ENCODE measurements at regions of chr9 and their contacts with region 1.

Region 1: GRCh38 chr9:69279084-69279729 is 45.8 kb upstream of the ENTREP1 start:
- DNase-seq: peak; percentile 69
- ATAC-seq: peak; percentile 96
- H3K4me3 Mint-ChIP-seq: no peak overlapping the region
- H3K27ac Mint-ChIP-seq: peak overlapping the region; percentile 24
- H3K4me1 Mint-ChIP-seq: peaks cover 9% of the 10 kb centered on the region
- H3K27me3 Mint-ChIP-seq: peaks cover 41% of the 10 kb centered on the region

Region 2: GRCh38 chr9:68631811-68632210 is 647.4 kb before region 1 on chr9:
- CTCF ChIA-PET with region 1: no interaction called
- POLR2A ChIA-PET with region 1: no interaction called
- intact Hi-C with region 1: no loop called
- DNase-seq: no peak
- ATAC-seq: no peak
- H3K4me3 Mint-ChIP-seq: no peak overlapping the region
- H3K27ac Mint-ChIP-seq: no peak overlapping the region
- H3K4me1 Mint-ChIP-seq: no peaks in the 10 kb centered on the region
- H3K27me3 Mint-ChIP-seq: peaks cover 15% of the 10 kb centered on the region

Region 3: GRCh38 chr9:69168709-69169217 is 110.4 kb before region 1 on chr9:
- CTCF ChIA-PET with region 1: no interaction called
- POLR2A ChIA-PET with region 1: no interaction called
- intact Hi-C with region 1: loop called in 1 of 2 experiments (anchors 5 kb)
- DNase-seq: peak; percentile 87
- ATAC-seq: peak; percentile 94
- H3K4me3 Mint-ChIP-seq: peak overlapping the region; percentile 70
- H3K27ac Mint-ChIP-seq: peak overlapping the region; percentile 73
- H3K4me1 Mint-ChIP-seq: peaks cover 25% of the 10 kb centered on the region
- H3K27me3 Mint-ChIP-seq: peaks cover 21% of the 10 kb centered on the region

Region 4: DNA sequence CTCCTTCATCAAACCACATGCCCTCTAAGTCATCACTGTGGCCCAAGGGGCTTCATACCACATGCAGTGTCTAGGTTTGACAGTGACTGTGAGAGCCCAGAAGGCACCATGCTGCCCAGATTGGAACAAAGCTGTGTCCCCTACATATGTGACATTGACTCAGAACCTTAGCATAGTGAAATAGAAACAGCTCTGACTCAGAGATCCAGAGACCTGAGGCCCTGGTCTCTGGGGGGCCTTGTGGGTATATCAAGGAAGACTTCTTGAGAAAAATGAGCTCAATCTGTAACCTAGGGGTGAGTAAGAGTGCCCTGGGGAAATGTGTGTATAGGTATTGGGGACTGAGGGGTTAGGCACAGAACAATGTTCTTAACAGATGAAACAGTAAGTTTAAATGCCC is 38.7 kb after region 1 on chr9:
- CTCF ChIA-PET with region 1: no interaction called
- POLR2A ChIA-PET with region 1: no interaction called
- intact Hi-C with region 1: loop called in 1 of 2 experiments (anchors 1 kb)
- DNase-seq: peak; percentile 55
- ATAC-seq: peak; percentile 97
- H3K4me3 Mint-ChIP-seq: no peak overlapping the region
- H3K27ac Mint-ChIP-seq: no peak overlapping the region
- H3K4me1 Mint-ChIP-seq: peaks cover 10% of the 10 kb centered on the region
- H3K27me3 Mint-ChIP-seq: peaks cover 19% of the 10 kb centered on the region

Region 5: GRCh38 chr9:69689991-69690538 is 410.9 kb after region 1 on chr9:
- CTCF ChIA-PET with region 1: no interaction called
- POLR2A ChIA-PET with region 1: no interaction called
- intact Hi-C with region 1: no loop called
- DNase-seq: no peak
- ATAC-seq: no peak
- H3K4me3 Mint-ChIP-seq: no peak overlapping the region
- H3K27ac Mint-ChIP-seq: no peak overlapping the region
- H3K4me1 Mint-ChIP-seq: no peaks in the 10 kb centered on the region
- H3K27me3 Mint-ChIP-seq: peaks cover 5% of the 10 kb centered on the region